Right lobe of liver (tissue), 6 donors: ENCODE measurements at regions of chr6 and their contacts with region 1.

Region 1: GRCh38 chr6:31901953-31902643 is at the start of gene ZBTB12:
- DNase-seq: peak; percentile 90 to 94 (median 93)
- ATAC-seq: peak; percentile 73 to 84 (median 78)
- H3K4me3 ChIP-seq: peak within 1 kb of the TSS; percentile 31 to 61 (median 60)
- H3K27ac ChIP-seq: peak within 1 kb of the TSS; percentile 22 to 69 (median 62)
- H3K4me1 ChIP-seq: peaks cover 0 to 15% (median under 1%) of the 10 kb centered on the region in 4 donors
- H3K27me3 ChIP-seq: no peaks in the 10 kb centered on the region
- CTCF ChIP-seq: no peak
- POLR2A ChIP-seq: peak; percentile 58
- total RNA-seq, gene ZBTB12: 0.25 to 0.82 (median 0.51) TPM in 5 of 6 experiments, not detected in the other

Region 2: GRCh38 chr6:31791324-31792089 is 110.6 kb before region 1 on chr6:
- intact Hi-C with region 1: no loop called
- DNase-seq: peak in 1 of 3 donors; percentile 37
- ATAC-seq: peak in 3 of 4 donors; percentile 22 to 26 (median 26)
- H3K4me3 ChIP-seq: no peak overlapping the region
- H3K27ac ChIP-seq: no peak overlapping the region
- H3K4me1 ChIP-seq: peaks cover 0 to 17% (median 4%) of the 10 kb centered on the region in 4 donors
- H3K27me3 ChIP-seq: no peaks in the 10 kb centered on the region
- CTCF ChIP-seq: peak; percentile 36 to 58 (median 56)
- POLR2A ChIP-seq: no peak

Region 3: DNA sequence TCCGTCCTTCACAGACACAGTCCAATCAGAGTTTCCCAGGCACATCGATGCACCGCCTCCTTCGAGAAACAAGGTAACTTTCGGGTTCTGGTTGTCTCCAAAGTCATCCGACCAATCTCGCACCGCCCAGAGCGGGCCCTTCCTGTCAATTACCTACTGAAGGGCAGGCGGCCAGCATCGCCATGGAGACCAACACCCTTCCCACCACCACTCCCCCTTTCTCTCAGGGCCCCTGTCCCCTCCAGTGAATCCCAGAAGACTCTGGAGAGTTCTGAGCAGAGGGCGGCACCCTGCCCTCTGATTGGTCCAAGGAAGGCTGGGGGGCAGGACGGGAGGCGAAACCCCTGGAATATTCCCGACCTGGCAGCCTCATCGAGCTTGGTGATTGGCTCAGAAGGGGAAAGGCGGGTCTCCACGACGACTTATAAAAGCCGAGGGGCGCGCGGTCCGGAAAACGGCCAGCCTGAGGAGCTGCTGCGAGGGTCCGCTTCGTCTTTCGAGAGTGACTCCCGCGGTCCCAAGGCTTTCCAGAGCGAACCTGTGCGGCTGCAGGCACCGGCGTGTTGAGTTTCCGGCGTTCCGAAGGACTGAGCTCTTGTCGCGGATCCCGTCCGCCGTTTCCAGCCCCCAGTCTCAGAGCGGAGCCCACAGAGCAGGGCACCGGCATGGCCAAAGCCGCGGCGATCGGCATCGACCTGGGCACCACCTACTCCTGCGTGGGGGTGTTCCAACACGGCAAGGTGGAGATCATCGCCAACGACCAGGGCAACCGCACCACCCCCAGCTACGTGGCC is 74.6 kb before region 1 on chr6 and contains the start of gene HSPA1B:
- intact Hi-C with region 1: no loop called
- DNase-seq: peak; percentile 97 to 99 (median 99)
- ATAC-seq: peak; percentile 45 to 91 (median 69)
- H3K4me3 ChIP-seq: peak within 1 kb of the TSS; percentile 26 to 54 (median 48)
- H3K27ac ChIP-seq: peak within 1 kb of the TSS; percentile 87 to 98 (median 90)
- H3K4me1 ChIP-seq: peaks cover 0 to 29% (median 7%) of the 10 kb centered on the region in 4 donors
- H3K27me3 ChIP-seq: no peaks in the 10 kb centered on the region
- CTCF ChIP-seq: no peak
- POLR2A ChIP-seq: peak; percentile 100
- total RNA-seq, gene HSPA1B: 41.5 to 144 (median 47.5) TPM

Region 4: GRCh38 chr6:31958741-31959739 is 56.9 kb after region 1 on chr6 and contains the starts of genes NELFE and SKIC2:
- intact Hi-C with region 1: loop called in 1 of 2 experiments (anchors 10 kb)
- DNase-seq: peak; percentile 98 to 99 (median 99)
- ATAC-seq: peak; percentile 96 to 98 (median 98)
- H3K4me3 ChIP-seq: peak within 1 kb of the TSS; percentile 86 to 91 (median 87)
- H3K27ac ChIP-seq: peak within 1 kb of the TSS; percentile 59 to 81 (median 65)
- H3K4me1 ChIP-seq: peaks cover 0 to 19% (median 7%) of the 10 kb centered on the region in 4 donors
- H3K27me3 ChIP-seq: no peaks in the 10 kb centered on the region
- CTCF ChIP-seq: no peak
- POLR2A ChIP-seq: peak; percentile 69
- total RNA-seq, gene NELFE: 9.3 to 33.8 (median 18.3) TPM
- total RNA-seq, gene SKIC2: 26.3 to 73.1 (median 47.1) TPM

Region 5: DNA sequence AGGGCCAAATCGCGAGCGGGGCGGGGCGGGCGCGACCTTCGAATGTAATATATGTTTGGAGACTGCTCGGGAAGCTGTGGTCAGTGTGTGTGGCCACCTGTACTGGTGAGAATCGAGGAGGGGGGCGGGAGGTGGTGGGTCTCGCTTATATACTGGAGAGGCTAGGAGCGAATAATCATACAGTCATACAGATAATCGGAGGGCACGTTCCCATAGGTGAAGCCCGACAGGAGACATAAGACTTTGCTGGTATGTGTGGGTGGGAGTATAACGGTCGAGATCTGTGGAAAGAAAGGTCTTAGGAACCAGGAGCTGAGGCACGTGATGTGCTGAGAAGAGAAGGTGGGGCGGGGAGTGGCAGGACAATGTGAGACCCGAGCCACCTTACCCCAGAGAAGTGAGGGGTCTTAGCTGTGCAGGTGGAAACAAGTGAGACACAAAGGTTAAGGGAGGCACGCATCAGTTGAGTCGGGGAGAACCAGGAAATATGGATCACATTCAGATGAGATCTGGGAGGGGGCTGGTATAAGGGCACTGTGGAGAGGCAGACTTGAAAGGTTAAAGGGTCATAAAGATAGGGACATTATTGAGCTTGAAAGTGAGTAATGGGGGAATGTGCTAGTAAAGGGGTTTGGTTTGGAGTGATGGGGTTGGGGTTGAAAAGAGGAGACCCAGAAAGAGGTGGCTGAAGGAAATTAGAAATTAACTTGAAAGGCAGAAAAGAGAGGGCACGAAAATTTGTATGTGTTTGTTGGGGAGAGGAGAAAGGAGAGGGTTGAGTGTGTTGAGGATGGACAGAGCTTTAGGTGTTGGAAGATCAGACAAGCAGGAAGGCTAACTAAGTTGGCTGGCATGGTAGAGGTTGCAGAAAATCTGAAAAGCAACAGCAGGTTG is 276.7 kb after region 1 on chr6:
- intact Hi-C with region 1: no loop called
- DNase-seq: peak in 1 of 3 donors; percentile 79
- ATAC-seq: no peak
- H3K4me3 ChIP-seq: peak overlapping the region; percentile 54 to 87 (median 85)
- H3K27ac ChIP-seq: peak overlapping the region; percentile 73 to 97 (median 82)
- H3K4me1 ChIP-seq: peaks cover 0 to 32% (median 9%) of the 10 kb centered on the region in 4 donors
- H3K27me3 ChIP-seq: no peaks in the 10 kb centered on the region
- CTCF ChIP-seq: no peak
- POLR2A ChIP-seq: no peak